ENCODE measurements at regions of chrX and their contacts with region 1.

Region 1: DNA sequence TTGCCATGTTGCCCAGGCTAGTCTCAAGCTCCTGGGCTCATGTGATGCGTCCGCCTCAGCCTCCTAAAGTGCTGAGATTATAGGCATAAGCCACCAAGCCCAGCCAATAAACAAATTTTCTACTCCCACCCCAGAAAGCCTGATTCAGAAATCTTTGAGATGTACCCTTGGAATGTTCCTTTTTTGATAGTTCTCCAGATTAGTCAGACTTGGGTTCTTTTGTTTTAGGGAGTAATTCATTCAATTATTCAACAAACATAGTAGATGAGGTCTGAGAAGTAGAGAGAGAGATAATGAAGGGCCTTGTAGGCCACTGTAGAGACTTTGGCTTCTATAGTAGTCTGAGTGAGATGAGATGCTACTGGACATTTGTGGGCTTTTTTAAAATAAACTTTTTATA is 27.8 kb downstream of the RP2 start:
- DNase-seq: no peak
- ATAC-seq: no peak
- H3K4me3 ChIP-seq: no peak overlapping the region
- H3K27ac ChIP-seq: peak overlapping the region; percentile 57
- H3K4me1 ChIP-seq: peaks cover 13% of the 10 kb centered on the region
- H3K27me3 ChIP-seq: no peaks in the 10 kb centered on the region
- CTCF ChIP-seq: no peak

Region 2: GRCh38 chrX:46770817-46771163 is 93.8 kb before region 1 on chrX:
- CTCF ChIA-PET with region 1: no interaction called
- POLR2A ChIA-PET with region 1: no interaction called
- intact Hi-C with region 1: no loop called
- DNase-seq: peak; percentile 87
- ATAC-seq: peak; percentile 95
- H3K4me3 ChIP-seq: peak overlapping the region; percentile 42; the same call in 1 of the 2 replicates
- H3K27ac ChIP-seq: peak overlapping the region; percentile 93
- H3K4me1 ChIP-seq: peaks cover 31% of the 10 kb centered on the region
- H3K27me3 ChIP-seq: no peaks in the 10 kb centered on the region
- CTCF ChIP-seq: no peak

Region 3: DNA sequence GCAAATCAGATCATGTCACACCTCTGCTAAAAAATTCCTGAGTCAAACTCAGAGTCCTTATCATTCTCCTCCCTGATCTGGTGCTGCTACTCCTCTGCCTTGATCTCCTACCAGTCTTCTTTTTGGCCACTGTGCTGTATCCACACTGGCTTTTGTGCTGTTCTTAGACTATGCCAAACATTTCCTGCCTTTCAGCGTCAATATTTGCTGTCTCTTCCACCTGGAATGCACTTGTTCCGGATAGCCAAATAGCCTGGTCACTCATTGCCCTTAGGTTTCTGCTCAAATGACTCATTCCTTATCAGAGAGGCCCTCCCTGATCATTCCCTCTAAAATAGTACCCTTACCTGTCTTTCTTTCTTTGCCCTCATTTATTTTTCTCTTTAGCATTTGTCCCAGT is 52.2 kb before region 1 on chrX:
- CTCF ChIA-PET with region 1: no interaction called
- POLR2A ChIA-PET with region 1: interaction called, 10 read pairs
- intact Hi-C with region 1: no loop called
- DNase-seq: peak; percentile 86
- ATAC-seq: peak; percentile 96
- H3K4me3 ChIP-seq: peak overlapping the region; percentile 41; the same call in 1 of the 2 replicates
- H3K27ac ChIP-seq: peak overlapping the region; percentile 85
- H3K4me1 ChIP-seq: peaks cover 23% of the 10 kb centered on the region
- H3K27me3 ChIP-seq: no peaks in the 10 kb centered on the region
- CTCF ChIP-seq: no peak

Region 4: GRCh38 chrX:46984705-46985104 is 120.1 kb after region 1 on chrX:
- CTCF ChIA-PET with region 1: no interaction called
- POLR2A ChIA-PET with region 1: no interaction called
- intact Hi-C with region 1: no loop called
- DNase-seq: no peak
- ATAC-seq: no peak
- H3K4me3 ChIP-seq: no peak overlapping the region
- H3K27ac ChIP-seq: no peak overlapping the region
- H3K4me1 ChIP-seq: peaks cover 2% of the 10 kb centered on the region; the same call in 1 of the 2 replicates
- H3K27me3 ChIP-seq: no peaks in the 10 kb centered on the region
- CTCF ChIP-seq: no peak

Measured in PC-3 (cell line).